ENCODE measurements at regions of chr19 and their contacts with region 1.

Region 1: DNA sequence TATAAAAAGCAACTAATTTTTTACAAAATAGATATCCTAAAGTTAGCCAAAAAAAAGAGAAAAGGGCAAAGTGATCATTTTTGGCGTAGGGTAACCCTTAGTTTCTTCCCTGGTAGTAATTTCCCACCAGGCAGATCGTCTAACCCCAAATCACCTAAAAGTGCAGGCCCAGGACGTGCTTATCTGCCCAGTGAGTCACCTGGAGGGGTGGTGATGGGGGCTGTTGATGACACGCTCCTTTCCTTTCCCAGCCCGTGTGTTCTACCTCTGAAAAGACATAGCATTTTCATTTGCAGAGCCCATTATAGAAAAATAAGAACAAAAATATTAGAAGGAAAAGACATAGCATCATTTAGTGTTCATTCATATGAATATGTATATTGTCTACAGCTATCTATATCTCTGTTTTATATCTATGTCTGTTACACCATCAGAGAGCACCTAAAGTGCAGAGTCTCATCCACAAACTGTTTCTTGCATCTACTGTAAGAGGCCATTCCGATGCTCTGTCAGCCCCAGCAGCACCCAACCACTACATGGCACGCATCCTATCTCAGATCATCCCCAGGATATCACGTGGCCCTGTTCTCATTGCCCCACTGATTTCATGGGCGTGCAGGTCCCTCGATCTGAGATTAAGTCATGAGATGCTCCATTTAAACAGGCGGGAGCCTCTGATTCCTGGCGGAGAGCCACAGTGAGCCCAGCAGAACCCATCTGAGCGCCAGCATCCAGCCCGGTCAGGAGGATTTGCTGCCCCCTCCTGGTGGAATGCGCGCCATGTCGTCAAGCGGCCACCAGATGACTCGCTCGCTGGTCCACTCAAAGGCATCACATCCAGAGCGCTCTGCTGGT is 8.5 kb upstream of the LILRB3 start:
- DNase-seq: peak; percentile 86 to 94
- ATAC-seq: peak; percentile 96 to 100 (median 100)
- H3K4me3 ChIP-seq: no peak overlapping the region
- H3K4me3 Mint-ChIP-seq: no peak overlapping the region
- H3K27ac ChIP-seq: no peak overlapping the region
- H3K27ac Mint-ChIP-seq: peak overlapping the region in 1 of 2 donors; percentile 60
- H3K4me1 ChIP-seq: peaks cover 6% of the 10 kb centered on the region
- H3K4me1 Mint-ChIP-seq: peaks cover 5 to 6% of the 10 kb centered on the region in 2 donors
- H3K27me3 ChIP-seq: peaks cover 36% of the 10 kb centered on the region
- H3K27me3 Mint-ChIP-seq: peaks cover 26 to 52% of the 10 kb centered on the region in 2 donors
- CTCF ChIP-seq: peak; percentile 90

Region 2: GRCh38 chr19:54168174-54168917 is 63.0 kb before region 1 on chr19:
- intact Hi-C with region 1: loop called (anchors 1 kb)
- DNase-seq: peak; percentile 89 to 94
- ATAC-seq: peak; percentile 75 to 88 (median 82)
- H3K4me3 ChIP-seq: no peak overlapping the region
- H3K4me3 Mint-ChIP-seq: no peak overlapping the region
- H3K27ac ChIP-seq: no peak overlapping the region
- H3K27ac Mint-ChIP-seq: peak overlapping the region in 1 of 2 donors; percentile 27
- H3K4me1 ChIP-seq: peaks cover 32% of the 10 kb centered on the region
- H3K4me1 Mint-ChIP-seq: peaks cover 12 to 31% of the 10 kb centered on the region in 2 donors
- H3K27me3 ChIP-seq: no peaks in the 10 kb centered on the region
- H3K27me3 Mint-ChIP-seq: peaks cover 0 to 4% of the 10 kb centered on the region in 2 donors
- CTCF ChIP-seq: peak; percentile 86

Region 3: DNA sequence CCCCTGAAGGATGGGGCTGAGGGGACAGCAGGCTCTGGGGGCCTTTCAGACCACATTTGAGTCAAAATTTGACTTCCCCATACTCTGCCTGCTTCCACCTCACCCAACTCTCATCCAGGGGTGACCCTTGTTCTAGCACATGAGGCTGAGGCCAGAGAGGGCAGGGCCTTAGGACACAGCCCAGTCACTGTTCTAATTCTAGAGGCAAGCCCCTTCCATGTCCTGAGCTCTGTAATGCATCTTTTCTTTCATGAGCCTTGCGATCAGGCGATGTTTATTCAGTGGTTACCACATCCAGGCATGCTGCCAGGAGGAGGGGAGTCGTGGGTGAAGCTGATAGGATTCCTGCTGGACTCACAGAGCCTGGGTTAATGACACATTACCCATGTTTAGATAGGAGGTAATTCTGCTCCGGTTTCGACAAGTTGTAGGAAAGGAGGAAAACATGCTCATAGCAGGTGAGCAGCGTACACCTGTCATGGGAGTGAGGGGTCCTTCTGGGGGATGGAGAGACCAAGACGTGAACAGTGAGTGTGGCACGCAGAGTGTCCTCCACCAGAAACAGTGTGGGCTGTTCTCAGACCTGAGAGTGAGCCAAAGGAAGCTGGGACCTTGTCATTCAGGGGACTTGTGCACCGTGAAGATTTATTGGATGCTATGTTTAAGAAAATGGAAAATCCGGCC is 21.4 kb before region 1 on chr19:
- intact Hi-C with region 1: loop called (anchors 2 kb)
- DNase-seq: peak in 1 of 2 donors; percentile 65
- ATAC-seq: no peak
- H3K4me3 ChIP-seq: no peak overlapping the region
- H3K4me3 Mint-ChIP-seq: peak overlapping the region; percentile 86
- H3K27ac ChIP-seq: peak overlapping the region; percentile 77
- H3K27ac Mint-ChIP-seq: peak overlapping the region; percentile 90 to 94
- H3K4me1 ChIP-seq: peaks cover 64% of the 10 kb centered on the region
- H3K4me1 Mint-ChIP-seq: peaks cover 36 to 43% of the 10 kb centered on the region in 2 donors
- H3K27me3 ChIP-seq: no peaks in the 10 kb centered on the region
- H3K27me3 Mint-ChIP-seq: no peaks in the 10 kb centered on the region
- CTCF ChIP-seq: no peak

Measured in natural killer cell (primary cell).